Gastrocnemius medialis (tissue), 4 donors: ENCODE measurements at regions of chr6 and their contacts with region 1.

Region 1: DNA sequence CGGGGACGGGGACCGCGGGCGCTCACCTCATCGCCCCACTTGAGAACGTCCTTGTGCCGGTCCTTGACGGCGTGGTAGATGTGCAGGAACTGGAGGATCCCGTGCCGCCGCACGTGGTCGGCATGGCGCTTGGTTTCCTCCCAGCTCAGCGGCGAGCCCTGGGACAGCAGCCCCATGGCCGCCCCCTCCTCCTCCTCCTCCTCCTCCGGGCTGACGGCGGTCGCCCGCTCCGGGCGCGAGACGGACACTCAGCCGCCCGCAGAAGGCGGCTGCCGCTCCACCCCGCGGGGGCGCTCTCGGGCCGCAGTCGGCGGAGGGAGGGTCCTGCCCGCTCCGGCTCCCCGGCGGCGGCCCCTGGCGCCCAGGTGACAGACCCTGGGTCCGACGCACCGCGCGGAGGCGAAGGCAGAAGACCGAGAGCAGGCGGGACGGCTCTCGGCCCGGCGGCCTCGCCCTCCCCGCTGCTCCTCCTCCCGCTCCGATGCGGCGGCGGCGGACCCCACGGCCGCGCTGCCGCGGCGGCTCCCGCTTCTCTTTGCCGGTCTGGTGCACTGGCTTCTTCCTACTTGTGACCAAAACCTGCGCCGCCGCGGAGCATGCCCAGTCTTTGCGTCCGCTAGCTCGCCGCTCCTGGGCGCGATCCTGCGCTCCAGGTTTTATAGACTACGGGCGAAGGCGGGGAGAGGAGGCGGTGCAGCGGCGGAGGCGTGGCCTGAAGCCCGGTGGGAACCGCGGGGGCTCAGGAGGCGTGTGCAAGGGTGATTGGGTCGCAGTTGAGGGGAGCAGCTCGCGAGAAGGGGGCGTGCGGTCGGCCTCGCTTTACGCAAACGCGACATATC is at the start of gene GCLC:
- DNase-seq: peak; percentile 93 to 94
- ATAC-seq: peak; percentile 76 to 78
- H3K4me3 ChIP-seq: peak within 1 kb of the TSS; percentile 67 to 98 (median 81)
- H3K27ac ChIP-seq: peak within 1 kb of the TSS; percentile 92 to 98 (median 96)
- H3K4me1 ChIP-seq: peaks cover 49 to 51% of the 10 kb centered on the region in 2 donors
- H3K27me3 ChIP-seq: no peaks in the 10 kb centered on the region
- CTCF ChIP-seq: peak; percentile 68 to 90 (median 88)
- POLR2A ChIP-seq: peak; percentile 93 to 96
- total RNA-seq, gene GCLC: 16.4 to 29.0 (median 20.5) TPM

Region 2: DNA sequence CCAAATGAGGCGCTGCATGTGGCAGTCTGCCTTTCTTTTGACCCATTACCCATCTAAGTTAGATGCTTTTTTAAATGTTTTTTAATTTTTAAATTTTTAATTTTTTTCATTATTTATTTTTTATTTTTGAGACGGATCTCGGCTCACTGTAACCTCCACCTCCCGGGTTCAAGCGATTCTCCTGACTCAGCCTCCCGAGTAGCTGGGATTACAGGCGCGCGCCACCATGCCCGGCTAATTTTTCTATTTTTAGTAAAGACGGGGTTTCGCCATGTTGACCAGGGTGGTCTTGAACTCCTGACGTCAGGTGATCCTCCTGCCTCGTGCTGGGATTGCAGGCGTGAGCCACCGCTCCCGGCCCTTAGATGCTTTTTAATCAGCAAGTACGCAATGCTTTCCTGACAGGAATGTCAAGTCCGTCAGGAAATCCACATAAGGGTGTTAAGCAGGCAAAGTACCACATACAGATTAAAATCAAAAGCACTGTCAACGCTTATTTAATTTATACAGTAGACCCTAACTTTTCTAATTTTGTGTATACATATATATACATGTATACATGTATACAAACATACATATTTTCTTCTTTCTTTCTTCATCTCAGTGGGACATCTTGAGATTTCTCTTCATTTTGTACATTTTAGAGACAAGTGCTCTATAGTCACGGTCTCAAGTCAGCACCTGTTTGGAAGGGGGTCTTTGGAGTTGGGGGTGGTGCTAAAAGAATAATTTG is 548.6 kb before region 1 on chr6:
- in situ Hi-C with region 1: loop called in 1 of 4 experiments (anchors 10 kb)
- intact Hi-C with region 1: loop called (anchors 5 kb)
- DNase-seq: peak in 1 of 2 donors; percentile 34
- ATAC-seq: peak in 1 of 2 donors; percentile 4
- H3K4me3 ChIP-seq: peak overlapping the region; percentile 48 to 87 (median 70)
- H3K27ac ChIP-seq: peak overlapping the region; percentile 85 to 93 (median 92)
- H3K4me1 ChIP-seq: peaks cover 10 to 16% of the 10 kb centered on the region in 2 donors
- H3K27me3 ChIP-seq: no peaks in the 10 kb centered on the region
- CTCF ChIP-seq: no peak
- POLR2A ChIP-seq: no peak

Region 3: GRCh38 chr6:53492860-53493634 is 51.6 kb before region 1 on chr6:
- in situ Hi-C with region 1: no loop called
- intact Hi-C with region 1: loop called (anchors 2 kb)
- DNase-seq: peak in 1 of 2 donors; percentile 24
- ATAC-seq: peak; percentile 72 to 91
- H3K4me3 ChIP-seq: peak overlapping the region; percentile 29 to 54 (median 36)
- H3K27ac ChIP-seq: peak overlapping the region; percentile 36 to 76 (median 39)
- H3K4me1 ChIP-seq: peaks cover 5 to 9% of the 10 kb centered on the region in 2 donors
- H3K27me3 ChIP-seq: no peaks in the 10 kb centered on the region
- CTCF ChIP-seq: peak; percentile 26 to 78 (median 71)
- POLR2A ChIP-seq: no peak

Region 4: DNA sequence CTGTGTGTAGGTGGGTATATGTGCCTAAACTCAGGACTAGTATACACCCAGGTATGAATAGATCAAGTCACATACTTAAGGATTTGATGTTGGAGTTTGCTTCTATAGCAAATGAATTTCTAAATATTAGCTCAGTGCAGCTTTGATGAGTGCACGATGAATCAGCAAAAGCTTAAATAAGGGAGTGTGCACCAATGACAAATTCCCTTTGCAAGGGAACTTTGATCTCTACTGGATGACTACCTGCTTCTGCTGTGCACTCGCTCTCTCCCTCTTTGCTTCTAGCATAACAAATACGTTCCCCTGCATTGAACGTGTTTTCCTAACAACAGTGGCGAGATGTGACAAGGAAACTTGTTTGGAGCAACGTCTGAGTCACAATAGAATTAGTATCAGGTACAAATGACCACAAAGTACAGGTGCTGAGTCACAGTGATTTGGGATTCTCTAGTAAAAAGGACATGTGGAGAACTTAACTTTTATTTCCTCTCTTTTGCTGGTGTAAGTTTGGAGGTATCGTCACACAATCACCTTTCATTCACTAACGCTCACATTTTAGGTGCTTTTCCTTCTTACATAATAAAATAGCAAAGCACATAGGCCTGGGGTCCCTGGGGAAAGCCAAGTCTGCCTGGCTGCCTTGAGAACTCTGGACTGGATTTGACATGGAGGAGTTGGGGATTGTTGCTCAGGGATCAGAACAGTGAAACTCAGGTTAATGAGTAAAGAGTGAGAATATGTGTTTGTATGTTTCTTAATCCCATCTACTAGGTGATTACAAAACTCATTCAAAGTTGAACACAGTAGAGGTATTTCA is 71.2 kb after region 1 on chr6:
- in situ Hi-C with region 1: no loop called
- intact Hi-C with region 1: no loop called
- DNase-seq: no peak
- ATAC-seq: no peak
- H3K4me3 ChIP-seq: no peak overlapping the region
- H3K27ac ChIP-seq: no peak overlapping the region
- H3K4me1 ChIP-seq: no peaks in the 10 kb centered on the region
- H3K27me3 ChIP-seq: no peaks in the 10 kb centered on the region
- CTCF ChIP-seq: no peak
- POLR2A ChIP-seq: no peak

Region 5: GRCh38 chr6:53664623-53665022 is 119.9 kb after region 1 on chr6:
- in situ Hi-C with region 1: loop called in 2 of 4 experiments (anchors 10 kb)
- intact Hi-C with region 1: loop called (anchors 1 kb)
- DNase-seq: peak; percentile 80 to 92
- ATAC-seq: peak; percentile 82 to 83
- H3K4me3 ChIP-seq: peak overlapping the region; percentile 46 to 69 (median 53)
- H3K27ac ChIP-seq: peak overlapping the region; percentile 89 to 96 (median 92)
- H3K4me1 ChIP-seq: peaks cover 45 to 52% of the 10 kb centered on the region in 2 donors
- H3K27me3 ChIP-seq: no peaks in the 10 kb centered on the region
- CTCF ChIP-seq: peak in 3 of 5 experiments; percentile 10 to 43 (median 16)
- POLR2A ChIP-seq: peak in 1 of 2 donors; percentile 44

Region 6: DNA sequence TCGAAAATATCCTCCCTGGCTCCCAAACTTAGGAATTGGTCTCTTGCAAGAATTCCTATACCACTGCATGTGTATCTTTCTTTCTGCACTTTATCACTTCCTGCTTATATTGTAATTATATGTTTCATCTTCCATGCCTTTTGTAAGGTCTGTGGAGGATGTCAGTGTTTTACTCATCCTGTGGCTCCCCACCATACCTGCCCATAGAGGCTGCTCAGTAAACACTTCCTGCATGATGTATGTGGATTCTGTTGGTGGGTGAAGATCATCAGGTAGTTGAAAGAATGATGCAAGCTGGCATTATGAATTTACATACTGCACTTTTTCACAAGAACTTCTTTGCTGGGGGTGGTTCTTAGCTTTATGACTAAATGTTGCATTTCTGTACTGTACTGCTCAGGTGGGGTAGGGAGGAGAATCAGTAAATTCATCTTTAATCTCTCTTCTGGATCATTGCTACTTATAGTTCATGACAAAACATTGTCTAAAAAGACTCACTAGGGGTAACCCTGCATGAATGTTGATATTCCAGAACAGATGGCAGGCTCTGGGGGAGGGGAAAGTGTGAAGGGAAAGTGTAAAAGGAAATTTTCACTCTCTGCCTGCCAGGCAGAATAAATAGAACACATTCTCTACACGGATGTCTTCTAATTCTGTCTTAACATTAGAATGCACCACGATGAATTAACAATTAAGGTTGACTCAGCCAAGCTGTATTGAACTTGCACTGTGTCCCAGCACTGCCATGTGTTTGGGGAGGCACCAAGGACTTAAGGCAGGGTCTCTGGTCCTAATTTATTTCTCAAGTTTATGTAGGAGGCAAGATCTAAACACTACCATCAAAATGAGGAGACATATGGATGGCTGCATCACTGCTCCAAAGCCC is 156.9 kb after region 1 on chr6:
- in situ Hi-C with region 1: no loop called
- intact Hi-C with region 1: no loop called
- DNase-seq: peak in 1 of 2 donors; percentile 35
- ATAC-seq: peak; percentile 35 to 47
- H3K4me3 ChIP-seq: no peak overlapping the region
- H3K27ac ChIP-seq: peak overlapping the region; percentile 66 to 90 (median 86)
- H3K4me1 ChIP-seq: peaks cover 41 to 45% of the 10 kb centered on the region in 2 donors
- H3K27me3 ChIP-seq: no peaks in the 10 kb centered on the region
- CTCF ChIP-seq: no peak
- POLR2A ChIP-seq: no peak

Region 7: DNA sequence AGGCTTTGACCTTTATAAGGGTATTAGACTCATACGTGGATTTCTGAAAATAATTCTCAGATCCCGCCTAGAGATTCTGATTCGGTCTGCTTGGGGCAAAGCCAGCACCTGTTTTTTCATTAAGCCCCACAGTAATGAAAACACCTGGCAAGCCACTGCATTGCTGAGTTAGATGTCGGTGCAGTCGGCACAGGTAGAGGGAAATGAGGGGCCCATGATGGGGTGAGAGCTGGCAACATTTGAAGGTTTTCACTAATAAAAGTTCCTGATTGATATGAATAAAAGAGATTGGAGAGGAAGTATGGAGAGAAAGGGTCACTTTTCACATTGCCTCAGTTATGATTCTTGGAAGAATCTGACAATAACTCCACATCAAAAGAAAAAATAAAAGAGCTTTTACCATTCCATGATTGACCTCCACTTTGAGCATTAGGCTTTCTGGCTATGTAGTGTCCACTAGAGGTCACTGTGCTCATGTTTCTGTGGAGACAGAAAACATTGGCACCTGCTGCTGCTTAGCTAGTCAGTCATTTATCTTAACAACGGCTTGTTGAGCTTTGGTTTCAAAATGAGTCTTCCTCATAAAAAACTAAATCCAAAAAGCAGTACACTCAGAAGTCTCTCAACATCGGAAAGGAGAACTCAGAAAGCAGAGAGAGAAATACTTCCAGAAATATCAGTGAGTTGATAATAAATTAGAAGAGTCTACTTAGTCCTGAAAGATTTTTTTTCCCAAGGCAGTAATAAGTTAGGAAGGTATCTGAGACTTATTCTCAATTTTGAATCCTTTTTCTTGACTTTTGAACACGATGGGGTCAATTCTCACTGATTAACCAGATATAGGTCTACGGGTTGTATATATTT is 174.1 kb after region 1 on chr6:
- in situ Hi-C with region 1: no loop called
- intact Hi-C with region 1: loop called (anchors 2 kb)
- DNase-seq: peak; percentile 40 to 45
- ATAC-seq: peak; percentile 91 to 99
- H3K4me3 ChIP-seq: no peak overlapping the region
- H3K27ac ChIP-seq: peak overlapping the region in 3 of 4 donors; percentile 42 to 56 (median 43)
- H3K4me1 ChIP-seq: peaks cover 0 to 3% of the 10 kb centered on the region in 2 donors
- H3K27me3 ChIP-seq: no peaks in the 10 kb centered on the region
- CTCF ChIP-seq: peak; percentile 45 to 77 (median 61)
- POLR2A ChIP-seq: no peak

Region 8: DNA sequence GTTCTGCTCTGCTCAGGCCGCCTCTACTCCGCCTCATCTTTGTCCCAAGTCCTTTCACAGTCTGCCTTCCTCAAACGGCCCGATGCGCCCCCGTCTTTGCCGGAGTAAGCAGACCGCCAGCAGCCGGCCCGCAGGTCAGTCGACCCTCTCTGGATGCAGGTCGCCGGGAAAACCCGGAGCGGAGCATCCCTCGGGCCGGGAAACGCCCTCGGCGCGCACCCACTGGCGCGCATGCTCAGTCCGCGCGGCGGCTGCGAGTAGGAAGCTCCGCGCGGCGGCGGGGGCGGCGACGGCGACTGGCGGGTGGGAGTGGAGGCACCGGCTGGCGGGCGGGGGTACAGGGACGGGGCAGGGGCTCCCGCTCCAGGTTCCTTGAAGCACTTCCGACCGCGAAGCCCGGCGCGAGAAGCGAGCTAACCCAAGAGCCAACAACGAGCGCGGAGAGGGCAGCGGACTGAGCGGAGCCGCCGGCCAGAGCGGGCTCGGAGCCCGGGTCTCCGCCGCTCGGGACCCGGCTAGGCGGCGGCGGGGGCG is 250.1 kb after region 1 on chr6 and contains the start of gene LRRC1:
- in situ Hi-C with region 1: no loop called
- intact Hi-C with region 1: loop called (anchors 1 kb)
- DNase-seq: peak; percentile 39 to 57
- ATAC-seq: peak; percentile 72 to 80
- H3K4me3 ChIP-seq: peak within 1 kb of the TSS; percentile 62 to 77 (median 73)
- H3K27ac ChIP-seq: peak within 1 kb of the TSS in 3 of 4 donors; percentile 27 to 62 (median 46)
- H3K4me1 ChIP-seq: peaks cover 20 to 21% of the 10 kb centered on the region in 2 donors
- H3K27me3 ChIP-seq: peaks cover 28 to 38% (median 36%) of the 10 kb centered on the region in 3 donors
- CTCF ChIP-seq: no peak
- POLR2A ChIP-seq: peak; percentile 2 to 30
- total RNA-seq, gene LRRC1: 0.67 to 8.5 (median 2.4) TPM

Region 9: GRCh38 chr6:54085541-54085940 is 540.9 kb after region 1 on chr6:
- in situ Hi-C with region 1: no loop called
- intact Hi-C with region 1: no loop called
- DNase-seq: peak; percentile 38 to 75
- ATAC-seq: peak; percentile 57 to 61
- H3K4me3 ChIP-seq: peak overlapping the region in 3 of 4 donors; percentile 8 to 57 (median 52)
- H3K27ac ChIP-seq: peak overlapping the region; percentile 90 to 97 (median 94)
- H3K4me1 ChIP-seq: peaks cover 58 to 67% of the 10 kb centered on the region in 2 donors
- H3K27me3 ChIP-seq: no peaks in the 10 kb centered on the region
- CTCF ChIP-seq: no peak
- POLR2A ChIP-seq: no peak

Region 10: GRCh38 chr6:54282186-54282585 is 737.5 kb after region 1 on chr6:
- in situ Hi-C with region 1: no loop called
- intact Hi-C with region 1: no loop called
- DNase-seq: no peak
- ATAC-seq: no peak
- H3K4me3 ChIP-seq: no peak overlapping the region
- H3K27ac ChIP-seq: no peak overlapping the region
- H3K4me1 ChIP-seq: no peaks in the 10 kb centered on the region
- H3K27me3 ChIP-seq: no peaks in the 10 kb centered on the region
- CTCF ChIP-seq: no peak
- POLR2A ChIP-seq: no peak